Activated T-helper 2 cell treated with anti-CD3 and anti-CD28 coated beads, Interferon-gamma antibody, Interleukin-2, Interleukin-4, amounts not matched to agents 10 μg/mL and 5 μg/mL and 100 μg/mL, durations not matched to agents 14 hours and 24 hours and 36 hours (primary cell): ENCODE measurements at regions of chr1 and their contacts with region 1.

Region 1: GRCh38 chr1:222465211-222466041 is 82.5 kb downstream of the HHIPL2 start:
- DNase-seq: peak; percentile 75
- H3K4me3 Mint-ChIP-seq: peak overlapping the region; percentile 65
- H3K27ac Mint-ChIP-seq: peak overlapping the region; percentile 88
- H3K4me1 Mint-ChIP-seq: peaks cover 10% of the 10 kb centered on the region
- H3K27me3 Mint-ChIP-seq: peaks cover 16% of the 10 kb centered on the region

Region 2: DNA sequence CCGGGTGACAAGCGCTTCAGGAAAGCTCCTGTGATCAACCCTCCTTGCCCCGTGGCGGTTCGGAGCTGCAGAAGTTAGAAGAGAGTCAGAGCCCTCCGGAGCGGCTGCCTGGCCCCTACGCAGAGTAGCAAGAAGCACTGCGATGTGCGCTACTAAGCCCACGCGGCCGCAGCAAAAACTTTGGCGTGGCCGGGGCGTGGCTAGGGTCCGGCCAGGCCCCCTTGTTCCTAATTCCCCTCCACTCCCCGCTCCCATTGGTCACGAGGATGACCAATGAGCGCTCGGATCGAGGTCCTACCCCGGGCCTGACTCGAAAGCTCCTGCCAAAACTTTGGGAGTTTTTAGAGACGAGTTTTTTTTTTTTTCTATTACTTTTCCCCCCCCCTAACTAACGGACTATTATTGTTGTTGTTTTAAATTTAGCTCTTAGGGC is 1586.3 kb before region 1 on chr1 and contains the start of gene HLX:
- intact Hi-C with region 1: loop called (anchors 10 kb)
- DNase-seq: peak; percentile 15
- H3K4me3 Mint-ChIP-seq: peak within 1 kb of the TSS; percentile 85
- H3K27ac Mint-ChIP-seq: peak within 1 kb of the TSS; percentile 78
- H3K4me1 Mint-ChIP-seq: peaks cover 31% of the 10 kb centered on the region
- H3K27me3 Mint-ChIP-seq: peaks cover 70% of the 10 kb centered on the region
- total RNA-seq, gene HLX: 8.2 and 10.4 TPM in 2 replicates

Region 3: GRCh38 chr1:222634180-222635013 is 169.0 kb after region 1 on chr1:
- intact Hi-C with region 1: loop called (anchors 1 kb)
- DNase-seq: peak; percentile 53
- H3K4me3 Mint-ChIP-seq: no peak overlapping the region
- H3K27ac Mint-ChIP-seq: no peak overlapping the region
- H3K4me1 Mint-ChIP-seq: peaks cover 10% of the 10 kb centered on the region
- H3K27me3 Mint-ChIP-seq: no peaks in the 10 kb centered on the region

Region 4: DNA sequence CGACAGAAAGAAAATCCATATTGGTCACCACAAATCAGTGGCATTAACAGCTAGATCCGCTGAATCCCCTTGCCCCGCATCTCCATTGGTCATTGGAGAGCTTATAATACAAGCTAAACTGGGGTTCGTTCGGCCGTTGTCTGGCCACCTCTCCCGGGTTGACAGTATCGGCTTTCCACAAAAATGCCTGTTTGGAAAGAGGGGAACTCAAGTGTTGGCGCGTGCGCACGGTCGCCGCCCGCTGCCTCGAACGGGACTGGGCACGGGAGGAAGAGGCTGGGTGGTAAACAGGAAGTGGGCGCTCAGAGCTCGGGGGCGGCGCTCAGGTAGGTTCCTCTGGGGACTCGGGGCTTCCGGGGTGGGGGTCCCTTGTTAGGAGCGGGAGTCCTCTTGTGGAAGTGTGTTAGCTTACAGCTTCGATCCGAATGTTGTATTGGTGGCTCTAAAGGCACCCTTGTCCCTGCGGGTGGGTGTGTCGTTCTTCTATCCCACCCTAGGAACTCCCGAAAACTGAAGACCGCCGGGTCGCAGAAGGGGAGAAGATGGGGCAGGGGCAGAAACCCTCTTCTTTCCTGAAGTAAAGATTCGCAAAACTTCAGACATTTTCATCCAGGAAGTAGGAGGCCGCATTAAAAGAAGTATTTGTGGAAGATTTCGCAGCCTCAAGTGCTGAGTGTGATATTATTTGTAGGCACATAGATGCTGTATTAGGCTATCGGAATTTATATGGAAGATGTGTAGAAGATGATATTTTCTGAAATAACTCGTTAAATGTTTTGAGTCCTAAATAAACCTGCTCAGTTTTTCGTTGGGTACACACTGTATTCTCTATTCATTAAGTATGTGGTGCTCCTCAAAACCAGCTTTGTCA is 247.9 kb after region 1 on chr1:
- intact Hi-C with region 1: loop called (anchors 1 kb)
- DNase-seq: peak; percentile 81
- H3K4me3 Mint-ChIP-seq: peak overlapping the region; percentile 99
- H3K27ac Mint-ChIP-seq: peak overlapping the region; percentile 97
- H3K4me1 Mint-ChIP-seq: peaks cover 30% of the 10 kb centered on the region
- H3K27me3 Mint-ChIP-seq: no peaks in the 10 kb centered on the region

Region 5: DNA sequence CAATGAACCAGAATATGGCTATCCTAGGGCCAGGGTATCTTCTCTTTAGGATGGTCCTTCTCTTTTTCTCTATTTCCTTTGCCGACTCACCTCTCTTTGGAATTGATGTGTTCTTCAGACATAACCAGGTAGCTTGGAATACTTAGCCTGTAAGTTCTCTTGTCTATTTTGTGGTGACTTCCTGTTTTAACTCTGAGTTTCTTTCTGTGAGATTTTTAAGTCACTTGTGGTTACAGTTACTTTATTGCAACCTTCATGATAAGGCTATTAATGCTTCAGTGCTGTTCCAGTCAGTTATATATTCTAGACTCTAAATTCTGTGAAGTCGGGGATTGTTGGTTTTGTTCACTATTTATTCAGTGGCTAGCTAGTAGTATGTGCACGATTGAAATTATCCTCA is 395.6 kb after region 1 on chr1:
- intact Hi-C with region 1: no loop called
- DNase-seq: no peak
- H3K4me3 Mint-ChIP-seq: no peak overlapping the region
- H3K27ac Mint-ChIP-seq: no peak overlapping the region
- H3K4me1 Mint-ChIP-seq: peaks cover 3% of the 10 kb centered on the region
- H3K27me3 Mint-ChIP-seq: no peaks in the 10 kb centered on the region

Region 6: DNA sequence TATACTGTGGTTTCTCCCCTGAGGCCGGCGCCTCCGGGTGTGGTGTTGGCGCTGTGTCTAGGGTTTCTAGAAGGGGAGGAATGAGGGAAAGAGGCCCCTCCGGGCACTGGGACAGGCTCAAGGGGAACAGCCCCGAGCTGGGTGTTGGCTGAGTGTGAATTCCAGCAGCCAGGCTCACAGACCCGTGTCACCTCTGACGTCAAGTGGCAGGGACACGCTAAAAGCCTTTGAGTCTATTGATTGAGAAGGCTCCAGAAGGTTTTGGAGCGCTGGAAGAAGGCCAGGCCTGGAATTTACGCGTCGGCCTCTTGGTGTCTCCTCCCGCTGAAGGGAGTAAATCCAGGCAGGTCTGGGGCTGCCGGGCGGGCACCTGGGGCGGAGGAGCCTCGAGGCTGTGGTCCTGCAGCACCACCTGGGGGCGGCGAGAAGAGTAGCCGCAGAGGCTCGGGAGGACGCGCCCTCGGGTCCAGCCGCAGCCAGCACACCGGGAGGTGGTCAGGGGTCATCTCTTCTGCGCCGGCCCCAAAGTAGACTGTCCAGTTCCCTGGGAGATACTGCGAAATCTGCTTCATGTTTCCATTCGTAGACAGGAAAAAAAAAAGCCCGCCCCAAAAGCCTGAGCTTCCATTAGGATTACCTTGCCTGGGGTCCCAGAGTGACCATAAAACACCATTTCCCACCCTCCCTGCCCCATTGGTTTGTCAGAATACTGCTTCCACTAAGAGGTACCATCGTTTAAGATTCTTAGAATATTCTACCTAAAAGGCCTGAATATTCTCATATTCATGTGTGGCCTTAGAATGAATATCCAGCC is 616.0 kb after region 1 on chr1:
- intact Hi-C with region 1: loop called (anchors 1 kb)
- DNase-seq: peak; percentile 59
- H3K4me3 Mint-ChIP-seq: peak overlapping the region; percentile 15
- H3K27ac Mint-ChIP-seq: no peak overlapping the region
- H3K4me1 Mint-ChIP-seq: no peaks in the 10 kb centered on the region
- H3K27me3 Mint-ChIP-seq: no peaks in the 10 kb centered on the region